AG04450 (cell line): ENCODE measurements at regions of chr19 and their contacts with region 1.

Region 1: DNA sequence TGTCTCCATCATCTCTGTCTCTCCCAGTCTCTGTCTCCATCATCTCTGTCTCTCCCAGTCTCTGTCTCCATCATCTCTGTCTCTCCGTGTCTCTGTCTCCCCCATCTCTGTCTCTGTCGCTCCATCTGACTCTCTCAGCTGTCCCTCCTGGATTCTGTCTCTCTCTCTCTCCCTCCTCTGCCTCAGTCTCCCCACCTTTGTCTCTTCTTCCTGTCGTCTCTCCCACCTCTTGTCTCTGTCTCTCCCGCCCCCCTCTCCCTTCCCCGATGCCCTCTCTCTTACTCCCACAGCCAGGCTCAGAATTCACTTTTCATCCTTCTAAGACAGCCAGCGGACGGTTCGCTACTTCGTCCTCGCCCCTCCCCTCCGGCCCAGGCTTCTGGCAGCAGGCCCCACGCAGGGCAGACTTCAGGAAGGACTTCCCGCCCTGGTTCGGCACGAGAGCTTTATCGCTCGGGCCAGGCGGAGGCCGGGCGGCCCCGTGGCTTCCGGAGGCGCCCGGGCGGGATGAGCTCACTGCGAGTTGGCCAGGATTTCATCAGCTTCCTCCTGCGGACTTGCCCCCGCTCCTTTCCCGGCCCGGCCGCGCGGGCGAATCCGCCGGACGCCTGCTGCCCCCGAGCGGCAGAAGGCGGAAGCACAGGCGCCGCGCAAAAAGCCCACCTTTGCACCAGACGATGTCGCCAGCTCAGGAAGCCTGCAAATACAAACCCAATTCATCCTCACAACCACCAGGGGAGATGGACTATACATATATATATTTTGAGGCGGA is 12.4 kb upstream of the CCDC9 start:
- DNase-seq: peak; percentile 94
- H3K4me3 ChIP-seq: peak overlapping the region; percentile 63
- H3K27ac ChIP-seq: peak overlapping the region; percentile 95
- H3K27me3 ChIP-seq: no peaks in the 10 kb centered on the region
- CTCF ChIP-seq: peak; percentile 92

Region 2: GRCh38 chr19:47112997-47113849 is 130.7 kb before region 1 on chr19 and contains the start of gene ZC3H4:
- CTCF ChIA-PET with region 1: interaction called, 10 read pairs
- POLR2A ChIA-PET with region 1: interaction called, 7 read pairs
- DNase-seq: peak; percentile 99
- H3K4me3 ChIP-seq: peak within 1 kb of the TSS; percentile 96
- H3K27ac ChIP-seq: peak within 1 kb of the TSS; percentile 100
- H3K27me3 ChIP-seq: no peaks in the 10 kb centered on the region
- CTCF ChIP-seq: no peak
- polyA plus RNA-seq, gene ZC3H4: 4.9 and 7.3 TPM in 2 replicates

Region 3: DNA sequence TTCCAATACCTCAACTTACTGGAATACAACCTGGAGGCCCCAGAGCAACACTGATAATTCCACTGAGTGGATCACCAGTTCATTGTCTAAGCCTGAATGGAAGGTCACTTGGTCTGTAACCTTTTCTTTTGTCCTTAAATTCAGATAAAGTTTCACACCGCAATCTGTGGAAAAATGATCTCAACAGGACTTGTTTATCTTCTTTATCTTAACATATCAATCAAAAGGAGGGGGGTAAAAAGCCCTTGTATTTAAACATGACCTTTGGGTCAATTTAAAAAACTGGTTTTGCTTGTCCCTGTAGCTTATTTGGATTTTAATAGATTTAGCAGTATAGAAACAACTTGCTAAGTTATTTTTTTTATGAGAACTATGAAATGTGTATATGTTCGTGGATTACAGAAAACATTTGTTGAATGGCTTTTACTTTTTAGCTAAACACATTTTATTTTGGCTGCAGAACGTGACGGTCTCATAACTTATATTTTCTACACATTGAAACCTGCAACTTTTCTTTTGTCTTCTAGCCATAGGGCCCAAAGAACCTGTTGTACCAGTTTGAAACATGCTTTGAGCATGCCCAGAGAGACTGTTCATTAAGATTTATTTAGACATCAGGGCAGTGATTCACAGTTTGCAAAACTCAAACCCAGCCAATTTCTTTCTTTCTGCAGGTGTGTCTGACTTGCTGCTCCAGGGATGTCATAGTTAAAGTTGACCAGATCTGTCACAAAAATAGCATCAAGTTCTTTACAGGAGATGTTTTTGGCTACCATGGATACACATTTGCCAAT is 91.5 kb before region 1 on chr19:
- CTCF ChIA-PET with region 1: interaction called, 351 read pairs
- POLR2A ChIA-PET with region 1: interaction called, 4 read pairs
- DNase-seq: no peak
- H3K4me3 ChIP-seq: no peak overlapping the region
- H3K27ac ChIP-seq: no peak overlapping the region
- H3K27me3 ChIP-seq: no peaks in the 10 kb centered on the region
- CTCF ChIP-seq: no peak

Region 4: GRCh38 chr19:47176627-47177090 is 67.3 kb before region 1 on chr19:
- CTCF ChIA-PET with region 1: interaction called, 16 read pairs
- POLR2A ChIA-PET with region 1: interaction called, 3 read pairs
- DNase-seq: peak; percentile 85
- H3K4me3 ChIP-seq: no peak overlapping the region
- H3K27ac ChIP-seq: peak overlapping the region; percentile 81
- H3K27me3 ChIP-seq: no peaks in the 10 kb centered on the region
- CTCF ChIP-seq: no peak

Region 5: GRCh38 chr19:47225746-47226425 is 18.1 kb before region 1 on chr19:
- CTCF ChIA-PET with region 1: interaction called, 21 read pairs
- POLR2A ChIA-PET with region 1: interaction called, 56 read pairs
- DNase-seq: peak; percentile 59
- H3K4me3 ChIP-seq: peak overlapping the region; percentile 98
- H3K27ac ChIP-seq: peak overlapping the region; percentile 77
- H3K27me3 ChIP-seq: no peaks in the 10 kb centered on the region
- CTCF ChIP-seq: no peak; the same call in none of the 2 replicates